ENCODE measurements at regions of chr4 and their contacts with region 1.

Region 1: GRCh38 chr4:140012688-140013486 is 141.1 kb downstream of the MAML3 start:
- DNase-seq: peak; percentile 70
- H3K4me3 ChIP-seq: no peak overlapping the region
- H3K27ac ChIP-seq: no peak overlapping the region
- H3K4me1 ChIP-seq: no peaks in the 10 kb centered on the region
- H3K27me3 ChIP-seq: no peaks in the 10 kb centered on the region
- CTCF ChIP-seq: peak; percentile 77

Region 2: DNA sequence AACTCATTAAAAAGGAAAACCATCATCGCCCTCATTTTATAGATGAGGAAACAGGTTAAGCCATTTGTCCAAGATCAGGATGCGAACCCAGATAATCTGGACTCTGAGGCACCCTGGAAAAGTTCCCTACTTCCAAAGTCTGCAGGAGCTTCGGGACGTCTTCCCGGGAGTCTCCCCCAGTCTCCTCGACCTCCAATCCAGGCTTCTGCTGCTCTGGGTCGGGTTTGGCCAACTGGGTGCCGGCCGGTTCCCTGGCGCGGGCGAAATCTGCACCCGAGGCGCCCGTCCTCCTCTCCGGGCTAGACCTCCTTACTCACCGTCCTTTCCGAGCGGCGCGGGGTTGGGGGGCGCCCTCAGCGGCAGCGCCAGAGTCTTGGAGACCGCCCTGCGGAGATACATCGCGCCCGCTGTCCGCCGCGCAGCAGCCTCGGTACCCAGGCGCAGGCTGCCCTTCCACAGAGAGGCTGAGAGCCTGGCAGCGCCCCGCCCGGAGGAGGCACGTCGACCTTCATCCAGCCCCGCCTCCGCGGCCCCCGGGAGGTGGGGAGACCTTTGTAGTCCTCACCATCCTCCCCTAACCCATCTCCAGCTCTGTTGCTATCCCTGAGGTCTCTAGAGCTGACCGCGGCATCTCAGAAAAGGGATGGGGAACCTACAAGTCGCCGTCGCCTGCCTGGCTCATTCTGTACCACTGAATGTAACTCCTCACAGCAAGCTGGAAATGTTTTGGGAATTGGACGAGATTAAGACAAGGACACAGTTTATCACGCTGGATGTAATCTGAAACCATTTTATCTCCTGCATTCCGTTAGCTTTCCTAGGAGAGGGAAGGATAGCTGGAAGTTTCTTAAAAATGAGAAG is 732.9 kb before region 1 on chr4 and contains the start of gene MGARP:
- CTCF ChIA-PET with region 1: no interaction called
- POLR2A ChIA-PET with region 1: no interaction called
- intact Hi-C with region 1: no loop called
- DNase-seq: peak; percentile 55
- H3K4me3 ChIP-seq: peak within 1 kb of the TSS; percentile 57
- H3K27ac ChIP-seq: no peak within 1 kb of the TSS
- H3K4me1 ChIP-seq: peaks cover 4% of the 10 kb centered on the region
- H3K27me3 ChIP-seq: no peaks in the 10 kb centered on the region
- CTCF ChIP-seq: no peak
- total RNA-seq, gene MGARP: 6.0 and 6.9 TPM in 2 replicates

Region 3: DNA sequence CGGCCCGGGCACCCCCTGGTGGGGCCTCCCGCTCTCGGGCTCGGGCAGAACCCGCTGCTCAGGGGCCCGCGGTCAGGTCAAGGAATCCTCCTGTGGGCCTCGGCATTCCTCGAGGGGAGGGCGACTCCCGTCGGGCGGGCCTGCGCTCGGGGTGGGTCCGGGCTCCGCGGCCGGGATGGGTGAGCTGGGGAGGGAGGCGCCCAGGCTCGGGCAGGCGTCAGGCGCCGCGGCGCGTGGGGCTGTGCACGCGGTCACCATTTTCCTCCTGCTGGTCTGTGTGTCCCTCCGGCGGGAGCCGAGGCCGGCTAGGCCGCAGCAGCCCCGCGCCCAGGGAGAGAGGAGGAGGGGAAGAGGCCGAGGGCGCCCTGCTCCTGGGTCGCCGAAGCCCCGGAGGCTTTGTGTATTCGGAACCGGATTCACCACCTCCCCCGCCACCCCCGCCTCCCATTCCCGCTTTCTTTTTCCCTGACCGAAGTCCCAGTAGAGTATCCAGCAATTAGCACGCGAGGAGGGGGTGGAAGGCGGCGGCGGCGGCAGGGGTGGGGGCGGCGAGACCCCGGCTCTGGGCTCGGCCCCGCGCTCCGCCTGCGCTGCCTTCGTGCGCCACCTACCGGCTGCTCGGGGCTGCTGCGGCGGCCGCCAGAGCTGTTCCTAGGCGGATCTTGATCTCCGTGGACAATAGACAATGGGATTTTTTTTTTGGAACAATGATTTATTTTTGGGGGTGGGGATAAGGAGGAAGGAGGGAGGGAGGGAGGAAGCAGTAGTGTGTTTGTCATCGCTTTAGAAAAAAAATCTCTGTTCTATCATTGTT is 240.1 kb after region 1 on chr4:
- CTCF ChIA-PET with region 1: interaction called, 9 read pairs
- POLR2A ChIA-PET with region 1: no interaction called
- intact Hi-C with region 1: loop called (anchors 1 kb)
- DNase-seq: peak; percentile 76
- H3K4me3 ChIP-seq: peak overlapping the region; percentile 60
- H3K27ac ChIP-seq: peak overlapping the region; percentile 81
- H3K4me1 ChIP-seq: peaks cover 13% of the 10 kb centered on the region
- H3K27me3 ChIP-seq: no peaks in the 10 kb centered on the region
- CTCF ChIP-seq: peak; percentile 88

Region 4: DNA sequence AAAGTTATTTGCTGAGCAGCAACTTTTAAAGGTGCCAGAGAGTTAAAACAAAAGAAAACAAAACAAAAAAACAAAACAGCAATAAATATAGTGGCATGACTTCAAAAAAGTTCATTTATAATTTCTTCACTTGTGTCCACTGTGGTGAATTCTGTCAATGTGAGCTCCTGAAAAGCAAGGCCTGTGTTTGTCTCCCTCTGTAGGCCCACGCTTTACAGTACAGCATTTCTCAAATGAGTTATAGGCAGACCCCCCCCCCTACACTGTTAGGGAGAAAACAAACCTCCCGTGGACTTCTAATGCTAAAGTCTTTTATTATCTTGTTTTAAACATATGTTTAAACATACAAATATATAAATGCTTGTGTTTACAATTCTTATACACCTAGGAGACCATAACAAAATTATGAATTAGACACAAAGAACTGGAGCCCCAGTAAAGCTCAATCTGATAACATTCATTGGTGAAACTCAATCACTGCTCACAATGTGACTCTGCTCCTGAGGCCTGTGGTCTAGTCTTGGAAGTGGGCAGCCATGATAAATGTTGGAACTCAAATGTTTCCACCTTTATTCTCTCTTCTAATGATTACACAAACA is 313.6 kb after region 1 on chr4:
- CTCF ChIA-PET with region 1: interaction called, 4 read pairs
- POLR2A ChIA-PET with region 1: no interaction called
- intact Hi-C with region 1: loop called (anchors 2 kb)
- DNase-seq: peak; percentile 41
- H3K4me3 ChIP-seq: no peak overlapping the region
- H3K27ac ChIP-seq: no peak overlapping the region
- H3K4me1 ChIP-seq: no peaks in the 10 kb centered on the region
- H3K27me3 ChIP-seq: no peaks in the 10 kb centered on the region
- CTCF ChIP-seq: peak; percentile 70